Ascending aorta (tissue), 2 donors: ENCODE measurements at regions of chr10 and their contacts with region 1.

Region 1: GRCh38 chr10:44386546-44387052 is 1.7 kb upstream of the CXCL12 start:
- DNase-seq: peak in 1 of 2 donors; percentile 77
- H3K4me3 ChIP-seq: peak overlapping the region in 1 of 2 donors; percentile 28
- H3K27ac ChIP-seq: no peak overlapping the region
- H3K4me1 ChIP-seq: peaks cover 0 to 8% of the 10 kb centered on the region in 2 donors
- H3K27me3 ChIP-seq: no peaks in the 10 kb centered on the region
- CTCF ChIP-seq: peak; percentile 86 to 95 (median 91)

Region 2: GRCh38 chr10:44715136-44715535 is 328.5 kb after region 1 on chr10:
- intact Hi-C with region 1: no loop called
- DNase-seq: no peak
- H3K4me3 ChIP-seq: no peak overlapping the region
- H3K27ac ChIP-seq: no peak overlapping the region
- H3K4me1 ChIP-seq: no peaks in the 10 kb centered on the region
- H3K27me3 ChIP-seq: no peaks in the 10 kb centered on the region
- CTCF ChIP-seq: no peak

Region 3: DNA sequence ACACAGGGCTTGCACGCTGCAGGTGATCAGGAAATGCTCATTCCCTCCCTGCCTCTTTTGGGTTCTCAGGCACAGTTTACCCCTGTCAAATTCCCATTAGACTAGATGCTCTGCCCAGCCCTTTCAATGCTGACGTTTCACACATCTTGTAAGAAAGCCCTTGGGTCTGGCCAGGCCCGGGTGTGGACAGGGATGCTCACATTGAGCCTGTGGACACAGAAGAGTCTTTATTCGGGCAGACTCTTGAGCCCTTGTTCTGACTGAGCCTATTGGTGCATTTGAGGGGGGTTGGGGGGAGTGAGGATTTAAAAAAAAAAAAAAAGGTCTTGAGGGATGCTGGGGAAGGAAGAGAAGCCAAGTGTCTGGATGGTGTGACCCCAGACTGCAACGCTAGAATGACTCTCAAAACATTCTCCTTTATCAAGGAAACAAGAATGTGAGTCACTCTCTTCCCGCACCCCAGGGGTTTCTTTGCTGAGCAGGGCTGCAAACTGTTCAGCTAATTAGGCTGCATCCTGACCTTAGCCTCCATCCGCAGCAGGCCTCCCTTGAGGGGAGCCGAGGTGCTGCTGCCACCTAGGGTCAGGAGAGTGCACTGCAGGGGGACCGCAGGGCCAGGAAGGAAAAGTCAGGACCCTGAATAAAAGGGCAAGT is 470.9 kb after region 1 on chr10:
- intact Hi-C with region 1: loop called (anchors 2 kb)
- DNase-seq: peak in 1 of 2 donors; percentile 72
- H3K4me3 ChIP-seq: no peak overlapping the region
- H3K27ac ChIP-seq: no peak overlapping the region
- H3K4me1 ChIP-seq: peaks cover 0 to 8% of the 10 kb centered on the region in 2 donors
- H3K27me3 ChIP-seq: no peaks in the 10 kb centered on the region
- CTCF ChIP-seq: peak; percentile 72 to 99 (median 99)

Region 4: DNA sequence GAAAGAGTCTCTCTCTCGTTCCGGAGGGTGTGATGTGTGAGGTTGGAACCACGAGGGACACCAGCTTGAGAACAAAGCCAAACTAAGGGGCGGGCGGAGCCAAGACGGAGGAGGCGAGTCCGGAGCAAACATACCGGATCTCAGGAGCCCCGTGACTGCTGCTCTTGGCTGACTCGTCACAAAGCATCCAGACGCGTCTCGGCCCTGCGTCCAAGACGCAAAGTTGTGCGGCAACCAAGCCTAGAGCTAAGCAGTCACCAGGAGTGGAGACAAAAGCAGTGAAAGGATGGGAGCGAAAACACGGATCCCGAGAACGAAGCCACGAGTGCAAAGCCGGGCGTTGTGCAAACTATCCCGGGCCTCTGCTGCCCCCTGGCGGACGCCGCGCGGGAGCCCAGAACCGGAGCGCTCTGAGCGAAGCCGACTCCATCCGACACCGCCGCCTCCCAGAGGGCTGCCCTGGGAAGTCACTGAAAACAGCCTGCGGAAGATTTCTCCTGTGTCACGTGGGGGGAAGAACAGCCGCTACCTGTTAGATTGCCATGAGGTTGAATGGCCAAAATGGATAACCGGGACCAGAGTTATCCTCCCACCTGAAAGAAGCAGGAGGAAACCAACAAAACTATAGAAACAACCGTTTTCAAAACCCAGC is 478.2 kb after region 1 on chr10:
- intact Hi-C with region 1: loop called (anchors 2 kb)
- DNase-seq: peak in 1 of 2 donors; percentile 93
- H3K4me3 ChIP-seq: peak overlapping the region; percentile 51 to 68
- H3K27ac ChIP-seq: peak overlapping the region; percentile 29 to 58
- H3K4me1 ChIP-seq: peaks cover 0 to 14% of the 10 kb centered on the region in 2 donors
- H3K27me3 ChIP-seq: no peaks in the 10 kb centered on the region
- CTCF ChIP-seq: peak; percentile 91 to 99 (median 93)

Region 5: DNA sequence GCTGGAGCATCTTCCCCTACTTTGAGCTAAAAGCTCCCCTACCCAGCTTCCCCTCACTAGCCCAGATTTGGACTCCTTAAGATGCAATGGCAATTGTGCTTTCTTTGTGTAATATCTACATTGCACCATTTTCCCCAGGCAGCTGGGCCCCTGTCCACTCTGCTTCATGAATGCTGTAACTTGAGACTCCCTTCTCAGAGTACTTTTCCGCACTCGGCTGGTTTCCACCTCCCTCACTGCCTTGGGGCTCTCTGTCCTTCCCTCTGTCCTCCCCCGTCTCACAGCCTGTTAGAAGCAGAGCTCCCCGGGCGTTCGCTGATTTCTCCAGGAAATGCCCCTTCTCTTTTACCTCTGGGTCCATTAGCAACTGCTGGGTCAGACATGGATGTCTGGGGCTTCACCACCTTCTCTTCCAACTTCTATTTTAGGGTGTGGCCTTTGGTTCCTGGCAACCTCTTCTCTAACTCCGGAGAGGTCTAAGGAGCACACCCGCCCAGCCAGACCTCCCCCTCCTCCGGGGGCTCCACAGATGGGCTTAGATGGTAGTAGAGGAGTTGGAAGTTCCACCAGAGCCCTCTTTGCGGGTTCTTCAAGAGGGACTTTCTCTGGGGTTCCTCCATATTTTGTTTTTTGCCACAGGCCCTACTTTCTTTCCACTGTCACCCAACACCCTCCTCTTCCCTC is 521.6 kb after region 1 on chr10:
- intact Hi-C with region 1: no loop called
- DNase-seq: no peak
- H3K4me3 ChIP-seq: no peak overlapping the region
- H3K27ac ChIP-seq: no peak overlapping the region
- H3K4me1 ChIP-seq: no peaks in the 10 kb centered on the region
- H3K27me3 ChIP-seq: no peaks in the 10 kb centered on the region
- CTCF ChIP-seq: no peak